Heart right ventricle (tissue), 16 donors: ENCODE measurements at regions of chr6 and their contacts with region 1.

Region 1: DNA sequence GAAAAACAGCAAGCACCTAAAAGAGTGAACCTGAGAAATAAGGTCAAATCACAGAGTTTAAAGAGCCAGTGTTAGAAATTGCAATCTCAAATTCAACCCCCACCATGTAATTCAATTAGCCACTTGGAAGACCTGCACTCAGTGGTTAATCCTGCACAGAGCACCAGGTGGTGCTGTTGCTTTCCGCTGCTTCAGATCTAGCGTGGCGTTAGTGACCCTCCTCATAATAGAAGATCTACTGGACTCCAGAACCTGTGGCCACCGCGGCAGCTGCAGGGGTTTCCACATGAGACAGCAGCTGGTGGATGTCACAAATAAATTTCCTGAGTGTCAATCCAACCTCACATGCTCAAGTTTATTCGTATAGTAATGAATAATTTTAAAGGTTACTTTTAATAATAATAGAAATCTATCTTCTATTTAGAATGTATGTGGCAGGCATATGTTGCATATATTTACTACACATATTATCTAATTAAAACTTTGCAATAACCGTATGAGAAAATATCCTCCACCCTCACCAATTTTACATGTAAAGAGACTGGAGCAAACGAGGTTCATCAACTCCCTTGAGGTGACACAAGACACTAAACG is 84.4 kb downstream of the SYNE1 start:
- DNase-seq: peak; percentile 63 to 71
- ATAC-seq: peak in 7 of 8 donors; percentile 81 to 94 (median 89)
- H3K4me3 ChIP-seq: no peak overlapping the region
- H3K27ac ChIP-seq: no peak overlapping the region
- H3K4me1 ChIP-seq: peaks cover 0 to 10% (median 0%) of the 10 kb centered on the region in 9 donors
- H3K27me3 ChIP-seq: no peaks in the 10 kb centered on the region
- CTCF ChIP-seq: peak; percentile 59 to 93 (median 88)

Region 2: DNA sequence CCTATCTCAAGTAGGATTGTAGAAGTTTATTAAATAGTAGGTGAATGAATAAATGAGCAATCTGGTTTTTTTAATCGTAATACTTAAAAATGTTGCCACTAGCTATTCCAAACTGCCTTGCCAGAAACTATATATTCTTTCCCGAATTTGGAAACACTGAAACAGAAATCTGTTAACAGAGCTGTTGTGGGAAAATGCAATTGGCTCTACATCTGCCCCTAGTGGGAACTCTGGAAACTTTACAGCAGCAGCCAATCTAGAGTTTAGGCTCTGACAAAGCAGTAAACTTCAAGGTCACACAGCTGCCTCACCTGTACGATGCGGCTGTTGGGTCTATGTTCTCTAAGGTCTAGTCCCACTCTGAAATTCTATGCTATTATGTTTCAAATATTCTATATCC is 42.8 kb after region 1 on chr6:
- intact Hi-C with region 1: loop called in 1 of 10 experiments (anchors 5 kb)
- DNase-seq: no peak
- ATAC-seq: no peak
- H3K4me3 ChIP-seq: no peak overlapping the region
- H3K27ac ChIP-seq: no peak overlapping the region
- H3K4me1 ChIP-seq: peaks cover 0 to 55% (median 19%) of the 10 kb centered on the region in 9 donors
- H3K27me3 ChIP-seq: no peaks in the 10 kb centered on the region
- CTCF ChIP-seq: peak in 8 of 9 donors; percentile 10 to 54 (median 30)

Region 3: DNA sequence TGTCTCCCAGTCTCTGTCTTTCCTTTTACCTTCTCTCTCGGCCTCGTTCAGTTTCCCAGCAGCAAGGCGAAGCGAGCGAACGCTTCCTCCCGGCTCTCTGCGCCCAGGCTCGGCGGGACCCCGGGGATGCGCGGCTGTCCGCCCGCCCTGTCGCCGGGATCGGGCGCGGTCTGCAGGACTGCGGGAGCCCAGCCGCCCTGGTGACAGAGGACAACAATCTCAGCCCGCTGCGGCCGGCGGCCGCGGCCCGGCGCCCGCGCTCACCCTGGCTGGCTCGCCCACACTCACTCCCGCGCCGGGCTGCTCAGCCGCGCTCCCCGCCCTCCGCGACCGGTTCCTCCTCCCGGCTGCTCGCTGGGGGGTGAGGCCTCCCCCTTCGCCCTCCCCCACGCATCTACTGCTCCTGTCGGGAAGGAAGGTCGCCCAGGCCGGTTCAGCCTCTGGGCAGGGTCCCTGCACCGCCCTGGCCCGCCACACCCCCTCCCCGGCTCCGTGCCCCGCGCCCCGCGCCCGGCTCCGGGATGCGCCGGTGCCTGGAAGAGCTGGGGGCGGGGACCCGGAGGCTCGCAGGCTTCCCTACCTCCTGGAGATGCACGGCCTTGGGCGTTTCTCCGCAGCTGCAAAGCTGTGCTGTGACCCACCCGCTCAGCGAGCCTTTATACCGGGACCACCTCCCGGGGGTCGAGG is 84.0 kb after region 1 on chr6:
- intact Hi-C with region 1: loop called in 5 of 10 experiments (anchors 5 to 10 kb)
- DNase-seq: peak; percentile 38 to 61
- ATAC-seq: peak; percentile 66 to 91 (median 75)
- H3K4me3 ChIP-seq: peak overlapping the region; percentile 53 to 82 (median 72)
- H3K27ac ChIP-seq: peak overlapping the region; percentile 24 to 86 (median 79)
- H3K4me1 ChIP-seq: peaks cover 0 to 33% (median 13%) of the 10 kb centered on the region in 9 donors
- H3K27me3 ChIP-seq: peaks cover 0 to 23% (median 0%) of the 10 kb centered on the region in 7 donors
- CTCF ChIP-seq: no peak

Region 4: GRCh38 chr6:152642989-152643388 is 90.3 kb after region 1 on chr6:
- intact Hi-C with region 1: loop called (anchors 1 to 10 kb)
- DNase-seq: peak; percentile 51 to 73
- ATAC-seq: peak; percentile 87 to 96 (median 92)
- H3K4me3 ChIP-seq: no peak overlapping the region
- H3K27ac ChIP-seq: no peak overlapping the region
- H3K4me1 ChIP-seq: peaks cover 0 to 2% (median 0%) of the 10 kb centered on the region in 9 donors
- H3K27me3 ChIP-seq: peaks cover 0 to 3% (median 0%) of the 10 kb centered on the region in 7 donors
- CTCF ChIP-seq: peak; percentile 36 to 84 (median 66)

Region 5: DNA sequence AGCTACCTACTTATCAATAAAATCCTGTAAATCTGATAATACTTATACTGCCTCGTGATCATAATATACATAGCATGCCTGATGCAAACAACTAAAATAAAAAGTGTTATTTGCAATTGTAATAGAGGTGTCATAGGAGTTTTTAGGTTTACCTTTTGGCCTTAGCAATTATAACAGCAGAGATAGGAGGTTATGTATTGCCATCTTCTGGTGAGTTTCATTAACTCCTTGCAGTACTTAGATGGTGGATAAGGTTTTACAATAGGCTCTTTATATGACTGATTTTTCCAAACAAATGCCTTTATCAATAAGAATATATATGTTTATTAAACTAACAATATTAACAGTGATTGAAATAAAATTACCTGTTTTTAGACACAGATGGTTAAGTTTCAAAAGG is 117.2 kb after region 1 on chr6:
- intact Hi-C with region 1: loop called in 2 of 10 experiments (anchors 2 kb)
- DNase-seq: no peak
- ATAC-seq: no peak
- H3K4me3 ChIP-seq: no peak overlapping the region
- H3K27ac ChIP-seq: no peak overlapping the region
- H3K4me1 ChIP-seq: peaks cover 0 to 15% (median 0%) of the 10 kb centered on the region in 9 donors
- H3K27me3 ChIP-seq: peaks cover 0 to 2% (median 0%) of the 10 kb centered on the region in 7 donors
- CTCF ChIP-seq: peak in 8 of 9 donors; percentile 23 to 67 (median 53)

Region 6: DNA sequence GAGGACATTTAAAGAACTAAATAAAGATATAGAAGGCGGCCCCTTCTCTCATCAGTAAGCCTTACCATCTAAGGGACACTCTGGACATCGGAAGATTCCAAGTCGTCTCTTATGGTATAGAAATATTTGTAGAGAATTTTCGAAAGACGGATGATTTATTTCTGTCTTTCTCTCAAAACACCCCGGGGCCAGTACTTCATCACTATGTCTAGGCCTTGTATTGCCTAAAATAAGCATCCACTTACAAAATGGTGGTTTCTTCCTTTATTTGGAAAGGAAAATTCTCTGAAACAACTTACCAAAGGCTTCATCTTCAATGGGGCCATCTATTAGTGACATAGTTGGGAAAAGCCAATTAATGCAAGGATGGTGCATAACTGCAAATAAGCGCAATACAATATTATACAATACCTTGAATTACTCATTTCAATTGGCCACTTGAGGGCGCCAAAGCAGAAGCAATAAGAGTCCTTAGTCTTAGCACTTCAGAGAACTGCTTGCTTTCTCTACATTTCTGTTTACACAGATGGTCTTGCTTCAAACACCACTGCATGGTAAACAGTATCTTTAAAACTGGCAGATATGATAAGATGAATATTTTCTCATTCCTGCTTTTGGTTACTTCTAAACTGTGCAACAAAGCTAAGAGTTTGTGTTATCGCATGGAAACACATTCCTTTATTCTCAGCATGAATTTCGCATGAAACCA is 311.1 kb after region 1 on chr6:
- intact Hi-C with region 1: loop called in 1 of 10 experiments (anchors 10 kb)
- DNase-seq: peak in 1 of 2 donors; percentile 73
- ATAC-seq: peak; percentile 61 to 84 (median 76)
- H3K4me3 ChIP-seq: no peak overlapping the region
- H3K27ac ChIP-seq: no peak overlapping the region
- H3K4me1 ChIP-seq: no peaks in the 10 kb centered on the region
- H3K27me3 ChIP-seq: peaks cover 0 to 5% (median 0%) of the 10 kb centered on the region in 7 donors
- CTCF ChIP-seq: peak; percentile 59 to 80 (median 76)

Region 7: GRCh38 chr6:152948150-152948768 is 395.5 kb after region 1 on chr6:
- intact Hi-C with region 1: loop called in 2 of 10 experiments (anchors 5 to 10 kb)
- DNase-seq: peak in 1 of 2 donors; percentile 7
- ATAC-seq: peak in 6 of 8 donors; percentile 52 to 75 (median 68)
- H3K4me3 ChIP-seq: peak overlapping the region in 2 of 10 donors; percentile 5 to 27
- H3K27ac ChIP-seq: no peak overlapping the region
- H3K4me1 ChIP-seq: peaks cover 0 to 11% (median 0%) of the 10 kb centered on the region in 9 donors
- H3K27me3 ChIP-seq: peaks cover 0 to 29% (median 3%) of the 10 kb centered on the region in 7 donors
- CTCF ChIP-seq: peak; percentile 36 to 78 (median 65)